GM18951 (cell line): ENCODE measurements at regions of chr2 and their contacts with region 1.

Region 1: GRCh38 chr2:39227628-39228412 is 15.9 kb downstream of the CDKL4 start:
- POLR2A ChIP-seq: no peak

Region 2: DNA sequence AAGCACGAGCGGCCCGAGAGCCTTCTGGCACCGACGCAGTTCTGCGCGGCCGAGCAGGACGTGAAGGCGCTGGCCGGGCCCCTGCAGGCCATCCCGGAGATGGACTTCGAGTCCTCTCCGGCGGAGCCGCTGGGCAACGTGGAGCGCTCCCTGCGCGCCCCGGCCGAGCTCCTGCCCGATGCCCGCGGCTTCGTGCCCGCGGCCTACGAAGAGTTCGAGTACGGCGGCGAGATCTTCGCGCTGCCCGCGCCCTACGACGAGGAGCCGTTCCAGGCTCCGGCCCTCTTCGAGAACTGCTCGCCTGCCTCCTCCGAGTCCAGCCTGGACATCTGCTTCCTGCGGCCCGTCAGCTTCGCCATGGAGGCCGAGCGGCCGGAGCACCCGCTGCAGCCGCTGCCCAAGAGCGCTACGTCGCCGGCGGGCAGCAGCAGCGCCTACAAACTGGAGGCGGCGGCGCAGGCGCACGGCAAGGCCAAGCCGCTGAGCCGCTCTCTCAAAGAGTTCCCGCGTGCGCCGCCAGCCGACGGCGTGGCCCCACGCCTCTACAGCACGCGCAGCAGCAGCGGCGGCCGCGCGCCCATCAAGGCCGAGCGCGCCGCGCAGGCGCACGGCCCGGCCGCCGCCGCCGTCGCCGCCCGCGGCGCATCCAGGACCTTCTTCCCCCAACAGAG is 267.7 kb before region 1 on chr2:
- in situ Hi-C with region 1: loop called (anchors 10 kb)
- POLR2A ChIP-seq: no peak

Region 3: GRCh38 chr2:39069890-39070465 is 157.8 kb before region 1 on chr2:
- in situ Hi-C with region 1: loop called (anchors 10 kb)
- POLR2A ChIP-seq: no peak

Region 4: DNA sequence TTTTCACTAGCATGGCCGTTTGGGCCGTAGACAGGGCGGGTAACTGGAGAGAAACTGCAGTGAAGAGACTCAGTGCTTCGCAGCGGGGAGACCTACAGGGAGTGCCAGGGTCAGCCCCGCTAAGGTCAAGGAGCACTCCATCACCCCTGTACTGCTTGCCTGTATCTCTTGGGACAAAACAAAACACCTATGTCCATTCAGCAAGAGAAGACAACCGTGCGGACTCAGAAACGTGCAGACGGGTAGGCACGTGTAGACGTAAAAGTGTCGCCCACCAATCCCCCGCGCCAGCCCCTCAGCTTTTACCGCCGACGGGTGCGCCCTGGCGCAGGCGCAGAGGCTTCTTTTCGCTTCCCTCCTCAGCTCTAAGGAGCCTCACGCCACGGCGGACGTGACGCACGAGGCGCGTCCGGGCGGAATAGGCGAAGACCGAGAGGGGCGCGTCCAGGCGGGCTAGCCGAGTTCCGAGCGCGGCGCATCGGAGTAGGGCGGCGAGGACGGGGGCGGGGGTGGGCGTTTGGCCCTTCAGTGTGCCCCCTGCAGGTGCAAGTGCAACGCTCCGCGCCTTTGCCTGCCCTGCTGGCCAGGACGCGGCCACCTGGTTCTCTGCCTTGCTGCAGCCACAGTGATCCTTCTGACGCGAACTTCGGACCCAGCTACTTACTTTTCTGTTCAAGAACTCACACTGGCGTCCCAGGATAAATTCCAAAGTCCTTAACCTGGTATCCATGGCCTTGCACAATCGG is 103.6 kb before region 1 on chr2:
- in situ Hi-C with region 1: no loop called
- POLR2A ChIP-seq: peak; percentile 97